ENCODE measurements at regions of chr18 and their contacts with region 1.

Region 1: DNA sequence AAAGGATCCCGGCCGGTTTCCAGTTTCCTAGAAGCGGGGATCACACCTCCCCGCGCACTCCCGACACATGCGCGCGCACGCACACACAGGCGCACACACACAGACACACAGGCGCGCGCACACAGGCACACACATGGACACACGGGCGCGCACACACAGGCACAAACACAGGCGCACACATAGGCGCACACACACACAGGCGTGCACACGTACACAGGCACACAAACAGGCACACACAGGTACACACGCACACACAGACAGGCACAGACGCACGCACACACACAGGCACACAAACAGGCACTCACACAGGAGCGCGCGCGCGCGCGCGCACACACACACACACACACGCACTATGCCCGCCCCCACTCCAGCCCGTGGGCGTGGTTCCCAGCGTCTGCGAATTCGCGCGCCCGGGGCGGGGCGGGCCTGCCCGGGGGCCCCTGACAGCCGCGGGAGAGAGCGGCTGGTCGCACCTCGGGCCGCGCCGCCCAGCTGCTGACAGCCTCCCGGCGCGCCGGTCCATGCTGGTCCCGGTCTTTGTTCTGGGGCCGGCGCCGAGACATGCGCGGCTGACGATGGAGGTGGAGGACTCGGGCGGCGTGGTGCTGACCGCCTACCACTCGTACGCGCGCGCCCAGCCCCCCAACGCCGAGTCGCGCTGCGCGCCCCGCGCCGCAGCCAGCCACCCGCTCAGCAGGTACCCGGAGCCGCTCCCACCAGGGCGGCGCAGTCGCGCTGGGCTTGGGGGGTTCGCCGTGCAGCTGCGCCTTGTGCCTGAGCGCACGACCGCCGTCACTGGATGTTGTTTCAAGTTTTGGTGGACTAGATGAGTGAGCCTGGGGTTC is at the start of gene ARHGAP28:
- DNase-seq: peak; percentile 89
- H3K4me3 ChIP-seq: peak within 1 kb of the TSS; percentile 47 to 78 (median 60)
- H3K27ac ChIP-seq: peak within 1 kb of the TSS; percentile 77 to 88 (median 82)
- H3K4me1 ChIP-seq: peaks cover 0 to 9% (median 4%) of the 10 kb centered on the region in 4 donors
- H3K27me3 ChIP-seq: no peaks in the 10 kb centered on the region
- CTCF ChIP-seq: no peak
- EP300 ChIP-seq: no peak
- POLR2A ChIP-seq: no peak
- total RNA-seq, gene ARHGAP28: 4.3 to 13.2 (median 9.0) TPM

Region 2: DNA sequence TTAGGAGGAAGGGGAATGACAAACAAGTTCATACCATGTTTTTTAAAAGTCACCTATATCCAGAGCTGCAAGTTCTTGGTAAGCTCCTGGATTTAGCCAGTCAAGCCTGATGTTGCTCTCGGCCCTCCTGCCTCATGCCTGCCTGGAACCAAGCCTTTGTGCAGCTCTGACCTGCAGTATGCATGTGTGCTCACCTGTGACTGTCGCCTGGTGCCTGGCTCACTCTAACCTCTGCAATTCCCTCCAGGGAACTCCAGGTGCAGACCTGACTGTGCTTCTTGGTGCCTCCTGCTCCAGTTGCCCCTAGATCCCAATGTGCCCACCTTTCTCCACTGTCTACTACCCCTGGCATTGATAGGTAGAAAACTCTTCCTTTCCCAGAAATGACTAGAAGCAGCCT is 1348.9 kb before region 1 on chr18:
- intact Hi-C with region 1: no loop called
- DNase-seq: no peak
- H3K4me3 ChIP-seq: no peak overlapping the region
- H3K27ac ChIP-seq: no peak overlapping the region
- H3K4me1 ChIP-seq: no peaks in the 10 kb centered on the region
- H3K27me3 ChIP-seq: no peaks in the 10 kb centered on the region
- CTCF ChIP-seq: no peak
- EP300 ChIP-seq: no peak
- POLR2A ChIP-seq: no peak

Region 3: GRCh38 chr18:6279308-6279707 is 450.2 kb before region 1 on chr18:
- intact Hi-C with region 1: no loop called
- DNase-seq: no peak
- H3K4me3 ChIP-seq: no peak overlapping the region
- H3K27ac ChIP-seq: no peak overlapping the region
- H3K4me1 ChIP-seq: no peaks in the 10 kb centered on the region
- H3K27me3 ChIP-seq: no peaks in the 10 kb centered on the region
- CTCF ChIP-seq: no peak
- EP300 ChIP-seq: no peak
- POLR2A ChIP-seq: no peak

Region 4: DNA sequence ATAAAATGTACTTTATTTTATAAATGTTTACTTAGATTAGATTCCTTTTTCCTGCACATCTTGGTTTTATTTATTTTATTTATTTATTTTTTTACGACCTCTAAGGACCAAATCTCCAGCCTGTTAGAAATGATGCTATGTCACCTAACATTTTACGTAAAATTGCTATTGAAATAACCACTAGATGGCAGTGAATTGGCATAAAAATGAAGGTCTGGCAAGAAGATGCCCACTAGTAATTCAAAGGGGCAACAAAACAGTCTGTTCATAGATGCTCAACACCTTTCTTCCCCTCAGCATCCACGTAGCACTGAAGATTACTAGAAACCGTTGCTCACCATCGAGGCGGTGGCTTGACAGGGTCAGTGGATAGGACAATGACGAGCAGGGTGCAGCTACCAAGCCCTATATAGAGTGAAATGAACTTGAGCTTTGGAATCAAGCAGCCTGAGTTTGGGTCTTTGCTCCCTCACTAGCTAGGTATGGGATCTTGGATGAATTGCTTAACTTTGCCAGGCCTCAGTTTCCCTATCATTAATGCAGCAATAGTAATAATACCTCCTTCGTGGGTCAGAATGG is 186.1 kb before region 1 on chr18:
- intact Hi-C with region 1: loop called (anchors 5 kb)
- DNase-seq: no peak
- H3K4me3 ChIP-seq: no peak overlapping the region
- H3K27ac ChIP-seq: no peak overlapping the region
- H3K4me1 ChIP-seq: peaks cover 0 to 4% (median 0%) of the 10 kb centered on the region in 4 donors
- H3K27me3 ChIP-seq: no peaks in the 10 kb centered on the region
- CTCF ChIP-seq: peak in 3 of 4 experiments; percentile 45 to 47 (median 46)
- EP300 ChIP-seq: no peak
- POLR2A ChIP-seq: no peak

Region 5: DNA sequence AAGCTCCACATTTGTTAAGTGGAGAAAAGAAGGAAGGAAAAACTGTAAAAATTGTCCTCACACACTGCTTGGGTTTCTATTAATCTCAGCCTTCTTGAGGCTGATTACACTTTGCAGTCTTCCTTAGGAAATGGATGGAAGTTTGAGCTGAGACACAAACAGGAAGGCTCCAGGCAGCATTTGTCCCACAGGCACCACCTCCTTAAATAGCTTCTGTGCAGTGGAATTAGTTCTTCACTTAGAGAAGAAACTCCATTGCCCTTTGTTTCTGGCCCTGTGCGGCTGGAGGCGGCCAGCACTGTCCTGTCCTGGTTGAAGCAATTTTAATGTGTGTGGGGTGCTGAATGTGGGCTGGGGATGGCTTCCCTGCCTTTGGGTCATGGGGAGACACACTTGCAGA is 44.3 kb after region 1 on chr18:
- intact Hi-C with region 1: loop called (anchors 2 kb)
- DNase-seq: no peak
- H3K4me3 ChIP-seq: peak overlapping the region in 1 of 4 donors; percentile 3
- H3K27ac ChIP-seq: peak overlapping the region in 3 of 4 donors; percentile 63 to 81 (median 77)
- H3K4me1 ChIP-seq: peaks cover 0 to 21% (median 15%) of the 10 kb centered on the region in 4 donors
- H3K27me3 ChIP-seq: no peaks in the 10 kb centered on the region
- CTCF ChIP-seq: no peak
- EP300 ChIP-seq: no peak
- POLR2A ChIP-seq: no peak

Region 6: GRCh38 chr18:6885992-6886796 is 156.7 kb after region 1 on chr18:
- intact Hi-C with region 1: loop called (anchors 5 kb)
- DNase-seq: no peak
- H3K4me3 ChIP-seq: no peak overlapping the region
- H3K27ac ChIP-seq: peak overlapping the region in 3 of 4 donors; percentile 40 to 59 (median 52)
- H3K4me1 ChIP-seq: peaks cover 0 to 19% (median 12%) of the 10 kb centered on the region in 4 donors
- H3K27me3 ChIP-seq: no peaks in the 10 kb centered on the region
- CTCF ChIP-seq: peak; percentile 48 to 79 (median 60)
- EP300 ChIP-seq: no peak
- POLR2A ChIP-seq: no peak

Region 7: DNA sequence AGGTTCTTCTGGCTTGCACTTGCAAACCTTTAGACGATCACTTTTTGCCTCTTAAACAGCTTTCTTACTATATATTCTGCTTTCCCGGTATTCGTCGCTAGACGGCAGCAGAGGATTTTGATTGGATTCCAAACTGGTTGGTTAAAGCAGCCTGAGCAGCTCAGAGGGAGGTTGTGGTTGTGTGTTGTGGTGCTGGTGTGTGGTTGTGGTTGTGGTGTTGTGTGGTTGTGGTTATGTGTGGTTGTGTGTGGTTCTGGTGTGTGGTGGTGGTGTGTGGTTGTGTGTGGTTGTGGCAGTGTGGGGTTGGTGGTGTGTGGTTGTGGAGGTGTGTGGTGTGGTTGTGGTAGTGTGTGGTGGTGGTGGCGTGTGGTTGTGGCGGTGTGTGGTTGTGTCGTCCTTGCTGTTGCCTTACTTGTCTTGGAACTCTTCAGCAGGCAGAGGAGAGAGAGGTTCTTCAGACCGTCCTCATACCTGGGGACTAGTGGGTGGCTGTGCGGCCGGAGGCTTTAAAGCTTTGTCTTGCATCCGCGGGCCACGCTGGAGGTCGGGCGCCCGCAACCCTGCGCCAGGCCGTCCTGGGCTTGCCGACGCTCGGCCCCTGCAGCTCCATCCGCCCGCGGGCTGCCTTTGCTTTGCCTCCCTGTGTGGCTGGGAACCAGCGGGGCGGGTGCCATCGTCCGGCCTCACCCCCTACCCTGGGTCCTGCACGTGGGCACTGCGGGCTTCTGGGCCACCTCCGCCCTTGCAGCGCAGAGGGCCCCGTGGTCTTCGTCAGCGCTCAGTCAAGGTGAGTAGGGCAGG is 190.8 kb after region 1 on chr18:
- intact Hi-C with region 1: no loop called
- DNase-seq: no peak
- H3K4me3 ChIP-seq: no peak overlapping the region
- H3K27ac ChIP-seq: no peak overlapping the region
- H3K4me1 ChIP-seq: no peaks in the 10 kb centered on the region
- H3K27me3 ChIP-seq: no peaks in the 10 kb centered on the region
- CTCF ChIP-seq: peak; percentile 37 to 68 (median 56)
- EP300 ChIP-seq: no peak
- POLR2A ChIP-seq: no peak